Ascending aorta (tissue), 2 donors: ENCODE measurements at regions of chr14 and their contacts with region 1.

Region 1: GRCh38 chr14:53953002-53953827 is 3.4 kb downstream of the BMP4 start:
- DNase-seq: peak in 1 of 2 donors; percentile 90
- H3K4me3 ChIP-seq: peak overlapping the region; percentile 65 to 72
- H3K27ac ChIP-seq: peak overlapping the region; percentile 82 to 85
- H3K4me1 ChIP-seq: peaks cover 0 to 9% of the 10 kb centered on the region in 2 donors
- H3K27me3 ChIP-seq: no peaks in the 10 kb centered on the region
- CTCF ChIP-seq: no peak

Region 2: DNA sequence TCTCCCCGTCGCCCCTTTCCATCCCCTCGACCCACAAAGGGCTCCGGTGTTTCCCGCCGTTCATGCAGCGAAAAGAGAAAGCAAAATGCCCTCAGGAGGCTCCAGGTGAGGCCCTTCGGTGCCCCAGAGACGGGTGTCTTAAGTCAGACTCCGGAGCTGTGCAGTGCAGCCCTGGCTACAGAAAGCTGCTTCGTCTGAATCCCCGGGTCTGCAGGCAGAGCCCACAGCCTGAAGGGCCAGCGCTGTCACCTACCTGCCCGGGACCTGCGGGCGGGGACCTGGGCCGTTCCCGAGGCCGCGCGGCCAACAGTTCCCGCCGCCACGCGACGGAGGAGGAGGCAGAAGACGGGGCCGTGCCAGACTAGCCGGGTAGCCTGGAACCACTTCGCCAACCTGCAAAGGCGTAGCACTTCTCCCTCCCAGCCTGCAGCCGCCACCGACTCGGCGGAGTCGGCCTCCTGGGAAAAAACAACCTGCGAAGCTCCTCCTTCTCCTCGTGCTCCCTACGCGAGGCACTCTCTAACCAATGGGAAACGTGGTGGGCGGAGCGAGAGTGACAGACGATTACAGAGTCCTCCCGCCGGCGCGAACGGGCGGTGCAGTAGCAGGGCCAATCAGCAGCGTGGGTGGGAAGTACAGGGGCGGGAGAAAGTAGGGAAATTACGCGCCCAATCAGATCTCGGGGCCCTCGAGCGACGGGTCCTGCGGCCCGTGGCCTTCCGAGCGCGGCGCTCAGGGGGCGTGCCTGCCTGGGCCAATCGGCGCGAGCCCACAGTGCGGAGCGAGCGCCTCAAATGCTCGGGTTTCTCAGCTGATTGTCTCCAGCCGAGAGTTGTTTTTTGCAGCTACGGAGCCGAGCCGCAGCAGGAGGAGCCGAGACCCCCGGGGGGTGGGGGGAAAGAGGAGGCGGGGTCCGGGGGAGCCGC is 1400.9 kb before region 1 on chr14 and contains the starts of genes GPR137C and TXNDC16:
- intact Hi-C with region 1: loop called (anchors 10 kb)
- DNase-seq: peak; percentile 99 to 100
- H3K4me3 ChIP-seq: peak within 1 kb of the TSS; percentile 82 to 93
- H3K27ac ChIP-seq: peak within 1 kb of the TSS; percentile 80 to 93
- H3K4me1 ChIP-seq: peaks cover 0 to 13% of the 10 kb centered on the region in 2 donors
- H3K27me3 ChIP-seq: no peaks in the 10 kb centered on the region
- CTCF ChIP-seq: no peak
- total RNA-seq, gene GPR137C: not detected
- total RNA-seq, gene TXNDC16: 1.8 TPM

Region 3: GRCh38 chr14:52791203-52792096 is 1161.8 kb before region 1 on chr14 and contains the start of gene GNPNAT1:
- intact Hi-C with region 1: loop called (anchors 10 kb)
- DNase-seq: peak; percentile 42 to 92
- H3K4me3 ChIP-seq: peak within 1 kb of the TSS; percentile 83 to 91
- H3K27ac ChIP-seq: peak within 1 kb of the TSS; percentile 94 to 95
- H3K4me1 ChIP-seq: peaks cover 6 to 21% of the 10 kb centered on the region in 2 donors
- H3K27me3 ChIP-seq: no peaks in the 10 kb centered on the region
- CTCF ChIP-seq: no peak
- total RNA-seq, gene GNPNAT1: 39.9 TPM

Region 4: DNA sequence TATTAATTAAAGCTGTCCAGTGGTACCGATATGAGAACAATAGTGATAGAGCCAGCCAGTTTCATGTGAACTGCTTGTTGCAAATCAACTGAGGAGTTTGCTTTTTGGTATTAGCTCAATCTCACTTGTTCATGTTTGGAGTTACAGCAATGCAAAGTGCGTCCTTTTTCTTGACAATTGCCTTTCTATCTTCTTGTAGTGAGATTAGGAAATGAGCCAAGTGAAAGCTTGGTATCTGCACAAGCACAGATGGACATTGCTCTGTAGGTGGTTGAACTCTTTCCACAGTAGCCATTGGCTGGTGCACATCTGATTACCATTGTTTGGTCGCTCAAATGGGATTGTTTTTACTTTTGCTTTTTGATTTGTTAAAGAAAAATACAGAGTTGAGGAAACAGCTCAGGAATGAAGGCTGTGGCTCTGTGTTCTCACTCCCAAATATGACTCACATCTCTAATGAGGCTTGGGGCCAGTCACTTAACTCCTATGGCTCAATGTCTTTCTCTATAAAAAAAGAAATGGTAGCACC is 238.0 kb before region 1 on chr14:
- intact Hi-C with region 1: loop called (anchors 5 kb)
- DNase-seq: no peak
- H3K4me3 ChIP-seq: peak overlapping the region in 1 of 2 donors; percentile 47
- H3K27ac ChIP-seq: no peak overlapping the region
- H3K4me1 ChIP-seq: peaks cover 0 to 3% of the 10 kb centered on the region in 2 donors
- H3K27me3 ChIP-seq: no peaks in the 10 kb centered on the region
- CTCF ChIP-seq: no peak

Region 5: DNA sequence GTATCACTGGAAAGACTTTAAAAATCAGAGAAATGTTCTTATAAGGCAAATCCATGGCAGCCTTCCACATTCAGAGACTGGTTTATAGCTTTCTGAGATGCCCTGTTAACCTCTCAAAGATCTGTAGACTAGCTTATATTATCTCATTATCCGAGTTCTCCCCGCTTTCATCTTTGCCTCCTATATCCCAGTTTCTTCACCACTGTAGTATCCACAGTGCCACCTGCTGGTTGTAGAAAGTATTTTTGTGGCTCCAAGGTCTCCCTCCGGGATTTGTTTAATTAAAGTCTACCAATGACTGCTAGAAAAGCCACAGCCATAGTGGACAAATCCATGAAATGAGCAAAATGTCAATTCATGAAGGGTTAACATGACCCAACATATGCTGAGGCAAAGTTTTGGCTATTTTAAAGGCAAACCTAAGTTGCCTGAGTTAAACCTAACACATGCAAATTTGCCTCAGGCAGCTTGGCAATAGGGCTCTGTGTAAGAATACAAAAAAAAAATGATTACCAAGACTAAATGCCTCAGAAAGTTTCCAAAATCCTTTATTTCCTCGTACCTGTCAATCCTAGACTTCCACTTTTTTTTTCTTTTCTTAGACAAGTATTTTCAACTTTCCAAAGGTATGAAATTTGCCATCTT is 222.2 kb after region 1 on chr14:
- intact Hi-C with region 1: loop called (anchors 2 kb)
- DNase-seq: peak in 1 of 2 donors; percentile 80
- H3K4me3 ChIP-seq: no peak overlapping the region
- H3K27ac ChIP-seq: peak overlapping the region in 1 of 2 donors; percentile 56
- H3K4me1 ChIP-seq: peaks cover 0 to 30% of the 10 kb centered on the region in 2 donors
- H3K27me3 ChIP-seq: no peaks in the 10 kb centered on the region
- CTCF ChIP-seq: peak; percentile 57 to 86 (median 81)

Region 6: GRCh38 chr14:54396493-54397335 is 443.5 kb after region 1 on chr14 and contains the start of gene CDKN3:
- intact Hi-C with region 1: loop called (anchors 2 kb)
- DNase-seq: peak; percentile 98 to 99
- H3K4me3 ChIP-seq: peak within 1 kb of the TSS; percentile 72 to 76
- H3K27ac ChIP-seq: peak within 1 kb of the TSS in 1 of 2 donors; percentile 24
- H3K4me1 ChIP-seq: peaks cover 5 to 12% of the 10 kb centered on the region in 2 donors
- H3K27me3 ChIP-seq: no peaks in the 10 kb centered on the region
- CTCF ChIP-seq: peak in 2 of 3 experiments; percentile 52 to 58
- total RNA-seq, gene CDKN3: not detected

Region 7: DNA sequence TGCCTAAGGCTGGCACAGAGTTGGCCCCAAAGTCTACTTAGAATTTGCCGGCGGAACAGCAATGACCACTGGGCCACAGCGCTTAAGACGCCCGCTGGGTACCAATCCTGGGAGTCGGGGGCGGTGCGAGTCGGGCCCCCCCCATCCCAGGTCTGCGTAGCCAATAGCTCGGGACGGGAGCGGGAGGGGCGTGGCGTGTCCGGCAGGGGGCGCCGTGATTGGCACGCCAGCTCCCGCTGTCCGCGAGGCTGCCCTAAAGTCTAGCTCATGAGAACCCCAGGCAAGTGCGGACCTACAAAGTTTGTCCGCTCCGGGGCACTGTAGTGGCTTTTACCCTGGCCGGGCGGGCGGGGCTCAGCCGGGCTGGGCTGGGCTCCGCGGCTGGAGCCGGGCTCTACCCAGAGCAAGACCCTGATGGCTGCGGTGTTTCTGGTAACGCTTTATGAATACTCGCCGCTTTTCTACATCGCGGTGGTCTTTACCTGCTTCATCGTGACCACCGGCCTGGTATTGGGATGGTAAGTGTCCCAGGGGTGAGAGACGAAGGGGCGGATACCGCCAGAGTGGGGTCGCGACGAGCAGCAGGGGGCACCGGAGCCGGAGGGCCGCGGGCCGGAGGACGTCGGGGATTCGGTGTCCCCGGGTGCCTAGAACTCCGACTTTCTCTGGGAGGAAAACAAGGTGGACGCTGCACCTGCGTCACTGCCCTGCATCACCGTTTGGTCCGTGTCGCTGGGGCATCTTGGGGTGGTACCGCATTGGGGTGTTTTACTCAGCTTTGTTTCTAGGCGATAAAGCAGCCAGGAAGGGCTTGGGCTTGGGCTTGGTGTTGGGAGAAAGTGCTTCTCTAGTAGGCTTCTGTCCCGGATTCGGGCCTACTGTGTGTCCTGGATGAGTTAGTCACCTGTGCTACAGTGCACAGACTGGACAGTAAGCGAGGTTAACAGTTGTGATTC is 556.6 kb after region 1 on chr14 and contains the start of gene CGRRF1:
- intact Hi-C with region 1: loop called (anchors 10 kb)
- DNase-seq: peak; percentile 93 to 99
- H3K4me3 ChIP-seq: peak within 1 kb of the TSS; percentile 91 to 95
- H3K27ac ChIP-seq: peak within 1 kb of the TSS; percentile 88
- H3K4me1 ChIP-seq: peaks cover 0 to 15% of the 10 kb centered on the region in 2 donors
- H3K27me3 ChIP-seq: no peaks in the 10 kb centered on the region
- CTCF ChIP-seq: peak; percentile 44 to 64 (median 54)
- total RNA-seq, gene CGRRF1: 1.2 TPM